Lower leg skin (tissue), 4 donors: ENCODE measurements at regions of chr20 and their contacts with region 1.

Region 1: GRCh38 chr20:6828794-6829423 is 61.4 kb downstream of the BMP2 start:
- DNase-seq: peak; percentile 70 to 88
- H3K4me3 ChIP-seq: no peak overlapping the region
- CTCF ChIP-seq: no peak
- POLR2A ChIP-seq: no peak

Region 2: DNA sequence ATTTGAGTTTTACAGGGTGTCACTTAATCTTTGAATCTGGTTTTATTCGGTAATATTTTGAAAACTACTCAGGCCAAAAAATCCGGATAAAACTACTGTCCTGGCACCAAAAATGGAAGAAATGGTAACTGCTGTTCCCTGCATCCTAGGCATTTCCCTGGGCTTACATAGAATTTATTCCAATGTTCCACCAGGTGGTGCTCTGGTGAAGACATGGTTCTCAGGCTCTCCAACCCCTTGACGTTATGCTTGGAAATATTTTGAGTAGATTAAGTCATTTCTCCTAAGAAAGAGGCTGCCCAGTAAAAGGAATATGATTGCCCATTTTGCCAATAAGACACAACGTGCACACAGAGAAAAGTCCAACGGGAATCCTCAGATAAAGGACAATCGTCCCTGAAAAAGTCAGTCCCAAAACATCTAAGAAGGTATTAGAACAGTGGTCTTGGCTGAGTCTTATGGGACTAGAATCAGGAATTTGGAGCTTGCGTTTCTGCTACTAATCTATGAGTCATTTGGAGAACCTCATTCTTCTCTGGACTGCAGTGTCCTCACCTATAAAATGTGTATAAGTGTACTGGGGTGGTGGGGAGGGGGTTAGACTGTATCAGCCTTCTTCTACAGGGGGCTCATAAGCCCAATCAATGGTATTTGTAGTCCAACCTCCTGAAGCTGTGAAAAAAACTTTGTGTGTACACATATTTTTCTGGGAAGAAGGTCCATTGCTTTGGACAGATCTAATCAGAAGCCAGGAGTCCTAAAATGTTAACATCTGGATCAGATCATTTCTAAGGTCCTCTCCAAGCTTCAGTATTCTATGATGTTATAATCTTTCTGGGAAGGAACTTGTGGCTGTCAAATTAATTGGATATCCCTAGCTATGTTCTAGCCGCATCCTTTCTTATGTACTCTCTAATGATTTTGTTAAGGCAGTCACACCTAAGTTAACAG is 192.4 kb before region 1 on chr20:
- intact Hi-C with region 1: loop called (anchors 10 kb)
- DNase-seq: no peak
- H3K4me3 ChIP-seq: no peak overlapping the region
- CTCF ChIP-seq: no peak
- POLR2A ChIP-seq: no peak

Region 3: DNA sequence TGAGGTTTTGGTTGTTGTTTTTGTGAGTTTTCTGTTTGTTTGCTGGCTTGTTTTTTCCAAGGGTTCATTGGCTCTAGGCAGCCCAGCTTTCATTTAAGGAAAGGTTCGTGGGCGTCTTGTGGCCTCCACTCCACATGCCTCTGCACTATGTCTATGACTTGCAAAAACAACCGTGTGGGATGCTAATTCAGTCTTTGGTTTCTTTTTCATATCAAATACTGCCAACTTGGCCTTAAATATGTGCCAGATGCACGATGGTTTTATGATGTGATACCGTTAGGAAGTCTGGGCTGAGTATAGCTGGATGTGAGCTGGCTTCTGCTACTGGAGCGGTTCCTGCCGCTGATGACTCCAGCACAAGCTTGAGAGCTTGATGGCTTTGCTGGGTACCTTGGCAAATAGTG is 34.9 kb after region 1 on chr20:
- intact Hi-C with region 1: no loop called
- DNase-seq: no peak
- H3K4me3 ChIP-seq: no peak overlapping the region
- CTCF ChIP-seq: no peak
- POLR2A ChIP-seq: no peak

Region 4: GRCh38 chr20:6956574-6956973 is 127.7 kb after region 1 on chr20:
- intact Hi-C with region 1: no loop called
- DNase-seq: no peak
- H3K4me3 ChIP-seq: no peak overlapping the region
- CTCF ChIP-seq: no peak
- POLR2A ChIP-seq: no peak

Region 5: DNA sequence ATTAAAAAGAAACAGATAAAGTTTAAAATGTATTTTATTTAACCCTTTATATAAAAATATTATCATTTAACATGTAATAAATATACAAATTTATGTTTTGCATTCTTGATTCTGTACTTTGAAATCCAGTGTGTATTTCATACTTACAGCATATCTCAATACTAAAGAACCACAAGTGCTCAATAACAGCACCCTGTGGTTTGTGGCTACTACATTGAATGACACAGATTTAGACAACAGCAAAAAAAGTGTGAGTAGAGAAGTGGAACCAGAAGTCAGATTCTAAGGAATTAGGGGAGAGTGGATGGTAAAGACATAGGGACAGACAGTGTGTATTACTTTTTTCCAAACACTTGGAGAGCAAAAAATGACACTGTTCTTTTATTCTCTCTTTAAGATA is 463.0 kb after region 1 on chr20:
- intact Hi-C with region 1: loop called (anchors 10 kb)
- DNase-seq: no peak
- H3K4me3 ChIP-seq: no peak overlapping the region
- CTCF ChIP-seq: no peak
- POLR2A ChIP-seq: no peak

Region 6: GRCh38 chr20:8602389-8603116 is 1773.6 kb after region 1 on chr20:
- intact Hi-C with region 1: no loop called
- DNase-seq: no peak
- H3K4me3 ChIP-seq: no peak overlapping the region
- CTCF ChIP-seq: no peak
- POLR2A ChIP-seq: no peak